ENCODE measurements at regions of chr5 and their contacts with region 1.

Region 1: GRCh38 chr5:91383027-91383955 is at the start of gene ARRDC3:
- DNase-seq: peak; percentile 99
- H3K4me3 Mint-ChIP-seq: peak within 1 kb of the TSS; percentile 94
- H3K27ac Mint-ChIP-seq: peak within 1 kb of the TSS; percentile 99
- H3K4me1 Mint-ChIP-seq: peaks cover 24% of the 10 kb centered on the region
- H3K27me3 Mint-ChIP-seq: peaks cover 4% of the 10 kb centered on the region
- total RNA-seq, gene ARRDC3: 12.4 and 13.1 TPM in 2 replicates

Region 2: DNA sequence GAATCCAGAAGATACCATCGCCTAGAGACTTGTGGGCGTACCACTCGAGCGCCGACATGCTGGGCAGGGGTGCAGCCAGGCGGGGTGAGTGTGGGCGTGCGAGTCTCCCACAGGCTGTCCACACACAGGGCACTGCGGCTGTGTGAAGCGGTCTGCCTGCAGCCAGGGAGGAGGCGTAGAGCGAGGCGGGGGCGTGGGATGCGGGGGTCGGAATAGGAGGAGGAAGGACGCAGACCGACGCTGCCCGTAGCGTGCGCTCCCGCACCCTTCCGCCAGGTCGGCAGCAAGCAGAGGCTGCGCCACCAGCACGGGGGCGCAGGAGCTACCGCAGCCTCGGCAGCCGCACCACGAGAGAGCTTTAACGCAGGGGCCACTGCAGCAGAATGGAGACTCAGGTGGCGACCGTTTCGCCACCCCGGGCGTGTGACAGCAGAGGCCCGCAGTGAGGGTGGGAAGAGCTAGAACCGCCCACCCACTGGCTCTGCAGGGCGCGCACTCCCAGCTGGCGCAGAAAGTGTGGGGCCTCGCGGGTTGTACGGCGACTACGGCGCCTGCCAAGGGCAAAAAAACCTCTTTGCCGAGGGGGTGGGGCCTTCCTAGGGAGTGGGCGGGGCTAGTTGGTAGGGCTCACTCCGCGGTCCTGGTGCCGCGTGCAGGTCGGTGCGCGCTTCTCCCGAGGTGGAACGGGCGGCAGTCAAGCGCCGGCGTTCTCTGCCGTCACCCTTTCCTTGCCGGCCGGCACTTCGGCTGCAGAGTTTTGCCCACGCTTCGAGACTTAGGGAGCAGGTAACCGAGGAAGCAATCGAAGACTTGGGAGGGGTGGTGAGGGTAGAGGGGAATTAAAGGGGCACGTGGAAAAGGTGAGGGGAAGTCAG is 908.8 kb before region 1 on chr5 and contains the starts of genes MBLAC2 and POLR3G:
- intact Hi-C with region 1: loop called (anchors 5 kb)
- DNase-seq: peak; percentile 97
- H3K4me3 Mint-ChIP-seq: peak within 1 kb of the TSS; percentile 98
- H3K27ac Mint-ChIP-seq: peak within 1 kb of the TSS; percentile 97
- H3K4me1 Mint-ChIP-seq: peaks cover 38% of the 10 kb centered on the region
- H3K27me3 Mint-ChIP-seq: no peaks in the 10 kb centered on the region
- total RNA-seq, gene MBLAC2: 6.1 and 6.4 TPM in 2 replicates
- total RNA-seq, gene POLR3G: 22.2 and 25.1 TPM in 2 replicates

Region 3: DNA sequence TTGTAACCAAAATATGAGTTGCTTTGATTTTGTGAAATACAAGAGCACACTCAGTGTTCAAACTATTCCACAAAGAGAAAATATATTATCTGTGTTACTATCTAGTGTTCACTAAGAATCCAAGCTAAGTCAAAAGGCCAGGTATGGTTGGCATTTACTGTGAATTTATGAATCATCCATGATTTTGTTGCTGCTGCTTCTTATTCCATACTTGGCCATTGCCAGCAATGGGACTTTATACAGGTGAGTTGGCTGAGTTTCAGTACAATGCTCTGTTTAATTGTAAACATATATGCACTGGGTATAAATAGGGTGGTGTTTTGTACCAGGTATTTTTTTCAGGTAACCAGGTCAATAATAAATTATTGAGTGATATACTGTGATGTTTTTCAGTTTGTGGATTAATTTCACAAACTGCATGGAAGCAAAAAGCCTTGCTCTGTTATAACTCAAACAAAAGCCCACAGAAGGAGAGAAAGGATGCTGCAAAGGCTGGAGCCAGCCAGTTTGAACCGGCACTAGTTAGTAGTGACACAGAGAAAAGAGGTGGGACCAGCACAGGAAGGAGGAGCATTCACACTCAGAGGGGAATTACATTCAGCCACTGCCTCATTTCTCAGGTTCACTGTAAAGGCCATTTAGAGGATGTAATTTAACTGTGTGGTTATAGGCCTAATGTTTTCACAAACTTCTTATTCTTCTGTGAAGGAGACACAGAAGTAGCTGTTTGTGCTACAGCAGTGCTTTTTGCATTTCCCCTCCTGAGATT is 442.9 kb before region 1 on chr5:
- intact Hi-C with region 1: loop called (anchors 1 kb)
- DNase-seq: peak; percentile 84
- H3K4me3 Mint-ChIP-seq: no peak overlapping the region
- H3K27ac Mint-ChIP-seq: peak overlapping the region; percentile 81
- H3K4me1 Mint-ChIP-seq: peaks cover 10% of the 10 kb centered on the region
- H3K27me3 Mint-ChIP-seq: no peaks in the 10 kb centered on the region

Region 4: GRCh38 chr5:91225848-91226686 is 157.2 kb before region 1 on chr5:
- intact Hi-C with region 1: loop called (anchors 1 kb)
- DNase-seq: peak; percentile 87
- H3K4me3 Mint-ChIP-seq: no peak overlapping the region
- H3K27ac Mint-ChIP-seq: no peak overlapping the region
- H3K4me1 Mint-ChIP-seq: peaks cover 3% of the 10 kb centered on the region
- H3K27me3 Mint-ChIP-seq: peaks cover 26% of the 10 kb centered on the region

Region 5: DNA sequence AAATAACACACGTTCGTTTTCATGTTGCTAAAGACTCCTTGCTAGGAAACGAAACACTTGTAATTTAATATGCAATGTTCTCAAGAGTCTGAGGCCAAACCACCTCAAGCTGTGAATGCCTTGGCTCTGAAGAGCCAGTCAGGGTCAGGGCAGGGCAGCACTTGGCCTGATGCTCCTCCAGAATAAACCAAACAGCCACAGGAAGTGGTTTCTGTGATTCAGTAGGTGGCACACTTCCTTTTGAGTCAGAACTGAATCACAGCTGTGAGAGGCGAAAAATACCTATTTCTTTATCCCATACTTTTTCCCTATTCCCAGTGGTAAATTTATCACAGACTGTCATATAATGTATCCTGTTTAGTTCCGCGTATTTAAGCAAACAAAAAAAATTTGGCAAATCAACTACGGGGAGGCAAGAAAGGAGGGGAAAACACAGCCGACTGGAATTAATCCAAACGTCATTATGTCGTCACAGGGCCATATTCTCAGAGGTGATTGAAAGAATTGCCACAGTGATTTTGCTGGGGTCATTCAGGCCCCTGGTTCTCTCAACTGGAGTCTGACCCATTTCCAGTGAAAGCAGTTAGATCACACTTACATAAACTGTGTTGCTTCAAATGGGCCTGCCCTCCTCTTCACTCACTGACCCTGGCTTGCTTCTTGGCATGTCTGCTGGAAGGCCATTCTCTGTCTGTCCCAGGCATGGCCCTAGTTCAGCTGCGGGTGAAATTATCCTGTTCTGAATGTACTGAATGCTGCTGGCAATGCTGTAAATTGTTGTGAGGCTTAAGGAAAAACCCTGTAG is 71.4 kb before region 1 on chr5:
- intact Hi-C with region 1: loop called (anchors 1 kb)
- DNase-seq: peak; percentile 89
- H3K4me3 Mint-ChIP-seq: peak overlapping the region; percentile 59
- H3K27ac Mint-ChIP-seq: peak overlapping the region; percentile 80
- H3K4me1 Mint-ChIP-seq: peaks cover 37% of the 10 kb centered on the region
- H3K27me3 Mint-ChIP-seq: no peaks in the 10 kb centered on the region